ENCODE measurements at regions of chr4 and their contacts with region 1.

Region 1: GRCh38 chr4:53929955-53930798 is 134.2 kb downstream of the CHIC2 start:
- DNase-seq: peak; percentile 82 to 83
- ATAC-seq: peak; percentile 92
- H3K4me3 ChIP-seq: no peak overlapping the region
- H3K27ac ChIP-seq: no peak overlapping the region
- H3K4me1 ChIP-seq: peaks cover 0 to 3% of the 10 kb centered on the region in 2 donors
- H3K27me3 ChIP-seq: no peaks in the 10 kb centered on the region

Region 2: GRCh38 chr4:53908661-53909078 is 21.5 kb before region 1 on chr4:
- intact Hi-C with region 1: loop called in 1 of 2 experiments (anchors 2 kb)
- DNase-seq: no peak
- ATAC-seq: peak; percentile 89
- H3K4me3 ChIP-seq: peak overlapping the region; percentile 54 to 76
- H3K27ac ChIP-seq: peak overlapping the region; percentile 51 to 82
- H3K4me1 ChIP-seq: peaks cover 2 to 4% of the 10 kb centered on the region in 2 donors
- H3K27me3 ChIP-seq: no peaks in the 10 kb centered on the region

Region 3: DNA sequence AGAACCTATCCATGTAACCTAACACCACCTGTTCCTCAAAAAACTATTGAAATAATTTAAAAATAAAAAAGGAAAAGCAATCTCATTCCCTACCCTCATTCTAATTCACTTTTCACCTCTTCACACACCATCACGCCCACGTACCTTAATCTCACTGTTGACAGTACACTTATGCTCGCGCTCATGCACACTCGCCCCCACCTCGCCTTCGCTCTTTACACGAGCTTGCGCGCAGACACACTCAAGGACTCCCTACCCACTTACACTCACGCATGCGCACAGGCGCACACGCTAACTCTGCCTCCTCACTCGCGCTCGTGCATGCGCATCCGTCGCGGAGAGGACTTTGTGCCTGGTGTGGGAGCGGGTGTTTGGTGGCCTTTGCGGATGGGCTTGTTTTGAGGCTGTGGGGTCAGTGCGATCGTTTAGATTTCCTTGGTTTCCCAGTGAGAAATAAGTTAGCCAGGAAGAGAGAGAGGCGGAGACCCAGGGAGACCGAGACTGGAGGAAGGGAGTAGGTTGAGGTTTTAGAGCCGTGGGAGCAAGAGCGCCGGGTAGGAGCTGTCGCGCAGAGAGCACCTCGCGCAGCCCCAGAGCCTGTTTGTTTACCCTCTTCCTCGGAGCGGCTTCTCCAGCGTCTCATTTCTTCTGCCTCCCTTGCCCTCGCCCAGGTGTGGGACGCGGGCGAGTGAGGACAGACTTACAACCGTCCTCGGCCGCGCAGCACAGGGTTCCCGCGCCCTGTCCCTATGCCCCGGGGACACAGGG is 161.6 kb after region 1 on chr4:
- intact Hi-C with region 1: loop called in 1 of 2 experiments (anchors 5 kb)
- DNase-seq: peak; percentile 89 to 94
- ATAC-seq: peak; percentile 94
- H3K4me3 ChIP-seq: peak overlapping the region; percentile 22 to 56
- H3K27ac ChIP-seq: no peak overlapping the region
- H3K4me1 ChIP-seq: no peaks in the 10 kb centered on the region
- H3K27me3 ChIP-seq: no peaks in the 10 kb centered on the region

Region 4: DNA sequence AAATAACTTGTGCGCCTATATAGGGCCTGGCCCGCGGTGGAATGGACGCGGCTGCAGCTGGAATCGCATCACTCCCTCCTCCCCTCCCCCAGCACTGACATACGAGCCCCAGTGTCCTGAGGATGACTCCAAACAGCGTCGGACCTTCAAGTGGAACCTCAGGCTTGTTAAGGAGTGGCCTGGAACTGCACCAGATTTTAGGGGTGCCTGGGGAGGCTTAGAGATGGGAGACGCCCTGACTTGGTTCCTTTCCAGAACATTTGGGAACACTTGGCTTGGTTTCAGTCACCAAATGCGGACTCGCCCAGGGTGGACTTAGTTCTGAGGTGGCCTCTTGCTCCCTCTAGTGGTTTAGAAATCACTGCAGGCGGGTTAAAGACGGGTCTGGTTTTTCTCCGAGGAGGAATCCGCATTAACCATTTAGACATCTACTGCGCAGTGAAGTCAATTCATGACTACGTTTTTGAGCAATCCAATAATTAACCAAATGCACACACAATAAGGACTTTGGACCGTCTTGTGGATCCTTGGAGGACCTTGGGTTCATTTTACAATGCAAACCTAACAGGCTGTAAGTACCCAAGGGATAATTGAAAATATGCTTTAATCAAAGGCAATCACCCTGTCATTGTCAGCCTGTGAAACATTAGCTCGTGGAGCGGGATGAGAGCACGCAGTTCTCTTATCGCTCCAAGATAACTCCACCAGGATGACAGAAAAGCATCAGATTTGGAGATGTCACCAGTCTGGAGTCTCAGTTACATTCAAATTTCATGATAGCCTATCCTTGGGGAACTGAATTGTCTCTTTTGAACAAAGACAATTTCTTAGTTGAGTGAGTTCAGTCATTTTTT is 287.7 kb after region 1 on chr4:
- intact Hi-C with region 1: loop called (anchors 1 to 2 kb)
- DNase-seq: peak; percentile 73 to 82
- ATAC-seq: peak; percentile 93
- H3K4me3 ChIP-seq: peak overlapping the region; percentile 9 to 36
- H3K27ac ChIP-seq: peak overlapping the region in 1 of 2 donors; percentile 20
- H3K4me1 ChIP-seq: no peaks in the 10 kb centered on the region
- H3K27me3 ChIP-seq: no peaks in the 10 kb centered on the region